ENCODE measurements at regions of chr2 and their contacts with region 1.

Region 1: GRCh38 chr2:224180810-224181209 is 141.7 kb upstream of the SERPINE2 start:
- DNase-seq: no peak
- ATAC-seq: no peak
- H3K4me3 ChIP-seq: no peak overlapping the region
- H3K4me3 Mint-ChIP-seq: no peak overlapping the region
- H3K27ac ChIP-seq: no peak overlapping the region
- H3K27ac Mint-ChIP-seq: no peak overlapping the region
- H3K4me1 ChIP-seq: no peaks in the 10 kb centered on the region
- H3K4me1 Mint-ChIP-seq: peaks cover 0 to 3% (median 0%) of the 10 kb centered on the region in 7 donors
- H3K27me3 ChIP-seq: no peaks in the 10 kb centered on the region
- H3K27me3 Mint-ChIP-seq: peaks cover 2 to 22% (median 6%) of the 10 kb centered on the region in 5 donors

Region 2: GRCh38 chr2:224072554-224073188 is 108.1 kb before region 1 on chr2:
- CTCF ChIA-PET with region 1: no interaction called
- POLR2A ChIA-PET with region 1: no interaction called
- intact Hi-C with region 1: loop called in 1 of 2 experiments (anchors 10 kb)
- DNase-seq: no peak
- ATAC-seq: no peak
- H3K4me3 ChIP-seq: no peak overlapping the region
- H3K4me3 Mint-ChIP-seq: no peak overlapping the region
- H3K27ac ChIP-seq: no peak overlapping the region
- H3K27ac Mint-ChIP-seq: no peak overlapping the region
- H3K4me1 ChIP-seq: no peaks in the 10 kb centered on the region
- H3K4me1 Mint-ChIP-seq: no peaks in the 10 kb centered on the region
- H3K27me3 ChIP-seq: no peaks in the 10 kb centered on the region
- H3K27me3 Mint-ChIP-seq: peaks cover 0 to 11% (median 6%) of the 10 kb centered on the region in 5 donors

Measured in naive thymus-derived CD4-positive, alpha-beta T cell (primary cell).